AG04450 (cell line): ENCODE measurements at regions of chr17 and their contacts with region 1.

Region 1: GRCh38 chr17:35747540-35748017 is 5.5 kb downstream of the GAS2L2 start:
- DNase-seq: peak; percentile 55
- H3K4me3 ChIP-seq: no peak overlapping the region
- H3K27ac ChIP-seq: no peak overlapping the region
- H3K27me3 ChIP-seq: peaks cover 53% of the 10 kb centered on the region
- CTCF ChIP-seq: peak; percentile 83

Region 2: GRCh38 chr17:35312790-35313711 is 434.5 kb before region 1 on chr17:
- CTCF ChIA-PET with region 1: interaction called, 16 read pairs
- POLR2A ChIA-PET with region 1: no interaction called
- DNase-seq: peak; percentile 56
- H3K4me3 ChIP-seq: peak overlapping the region; percentile 40
- H3K27ac ChIP-seq: no peak overlapping the region
- H3K27me3 ChIP-seq: no peaks in the 10 kb centered on the region
- CTCF ChIP-seq: peak; percentile 82

Region 3: GRCh38 chr17:35605678-35606077 is 141.9 kb before region 1 on chr17:
- CTCF ChIA-PET with region 1: interaction called, 357 read pairs
- POLR2A ChIA-PET with region 1: no interaction called
- DNase-seq: no peak
- H3K4me3 ChIP-seq: no peak overlapping the region
- H3K27ac ChIP-seq: peak overlapping the region; percentile 40
- H3K27me3 ChIP-seq: no peaks in the 10 kb centered on the region
- CTCF ChIP-seq: no peak

Region 4: GRCh38 chr17:35645923-35646322 is 101.7 kb before region 1 on chr17:
- CTCF ChIA-PET with region 1: interaction called, 17 read pairs
- POLR2A ChIA-PET with region 1: no interaction called
- DNase-seq: no peak
- H3K4me3 ChIP-seq: no peak overlapping the region
- H3K27ac ChIP-seq: no peak overlapping the region
- H3K27me3 ChIP-seq: no peaks in the 10 kb centered on the region
- CTCF ChIP-seq: no peak

Region 5: GRCh38 chr17:35705705-35706104 is 41.9 kb before region 1 on chr17:
- CTCF ChIA-PET with region 1: interaction called, 13 read pairs
- POLR2A ChIA-PET with region 1: no interaction called
- DNase-seq: no peak
- H3K4me3 ChIP-seq: no peak overlapping the region
- H3K27ac ChIP-seq: no peak overlapping the region
- H3K27me3 ChIP-seq: no peaks in the 10 kb centered on the region
- CTCF ChIP-seq: no peak

Region 6: GRCh38 chr17:35731239-35731931 is 16.2 kb before region 1 on chr17 and contains the start of gene RASL10B:
- CTCF ChIA-PET with region 1: interaction called, 21 read pairs
- POLR2A ChIA-PET with region 1: interaction called, 3 read pairs
- DNase-seq: no peak
- H3K4me3 ChIP-seq: peak within 1 kb of the TSS; percentile 70
- H3K27ac ChIP-seq: no peak within 1 kb of the TSS
- H3K27me3 ChIP-seq: no peaks in the 10 kb centered on the region
- CTCF ChIP-seq: no peak
- polyA plus RNA-seq, gene RASL10B: 3.3 and 4.3 TPM in 2 replicates